Caco-2 (cell line): ENCODE measurements at regions of chr1 and their contacts with region 1.

Region 1: GRCh38 chr1:62778216-62778615 is 5.7 kb upstream of the ATG4C start:
- DNase-seq: peak; percentile 41 to 49
- H3K4me3 ChIP-seq: no peak overlapping the region
- H3K4me3 Mint-ChIP-seq: peak overlapping the region; percentile 15
- H3K27ac Mint-ChIP-seq: peak overlapping the region; percentile 71
- H3K4me1 ChIP-seq: peaks cover 14% of the 10 kb centered on the region
- H3K4me1 Mint-ChIP-seq: peaks cover 16% of the 10 kb centered on the region
- H3K27me3 ChIP-seq: no peaks in the 10 kb centered on the region
- H3K27me3 Mint-ChIP-seq: no peaks in the 10 kb centered on the region
- CTCF ChIP-seq: no peak

Region 2: DNA sequence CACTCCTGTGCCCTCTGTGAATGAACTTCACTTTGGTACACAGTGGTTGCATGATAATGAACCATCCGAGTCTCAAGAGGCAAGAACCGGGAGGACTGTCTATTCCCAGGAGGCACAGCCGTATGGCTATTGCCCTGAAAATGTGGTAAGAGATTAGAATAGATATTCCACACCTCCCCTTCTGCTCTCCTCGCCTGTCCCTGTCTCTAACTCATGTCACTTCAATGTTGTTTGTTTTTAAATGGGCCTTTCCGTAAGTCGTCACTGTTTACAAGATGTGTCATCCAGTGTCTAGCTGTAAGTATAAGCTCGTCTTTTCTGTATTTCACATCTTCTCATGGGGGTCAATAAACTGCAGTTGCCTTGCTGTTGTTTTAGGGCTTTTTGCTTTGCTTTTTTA is 913.7 kb before region 1 on chr1:
- CTCF ChIA-PET with region 1: no interaction called
- POLR2A ChIA-PET with region 1: no interaction called
- intact Hi-C with region 1: no loop called
- DNase-seq: no peak
- H3K4me3 ChIP-seq: no peak overlapping the region
- H3K4me3 Mint-ChIP-seq: no peak overlapping the region
- H3K27ac Mint-ChIP-seq: no peak overlapping the region
- H3K4me1 ChIP-seq: no peaks in the 10 kb centered on the region
- H3K4me1 Mint-ChIP-seq: peaks cover 7% of the 10 kb centered on the region
- H3K27me3 ChIP-seq: no peaks in the 10 kb centered on the region
- H3K27me3 Mint-ChIP-seq: no peaks in the 10 kb centered on the region
- CTCF ChIP-seq: no peak

Region 3: DNA sequence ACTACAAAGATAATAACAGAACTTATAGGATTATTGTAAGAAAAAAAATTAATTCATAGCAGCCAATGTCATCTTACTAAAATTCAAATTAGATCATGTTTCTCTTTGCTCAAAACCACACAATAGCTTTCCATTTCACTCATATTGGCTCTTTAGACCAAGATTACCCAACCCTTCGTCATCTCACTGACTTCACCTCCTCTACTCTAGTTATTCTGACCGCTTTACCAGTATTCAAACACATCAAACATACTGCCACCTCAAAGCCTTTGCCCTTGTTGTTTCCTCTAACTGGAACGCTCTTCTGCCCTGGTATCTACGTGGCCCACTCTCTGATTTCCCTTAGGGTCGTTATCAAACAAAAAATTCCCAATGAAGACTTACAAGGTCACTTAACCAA is 179.2 kb before region 1 on chr1:
- CTCF ChIA-PET with region 1: no interaction called
- POLR2A ChIA-PET with region 1: no interaction called
- intact Hi-C with region 1: no loop called
- DNase-seq: no peak
- H3K4me3 ChIP-seq: no peak overlapping the region
- H3K4me3 Mint-ChIP-seq: no peak overlapping the region
- H3K27ac Mint-ChIP-seq: no peak overlapping the region
- H3K4me1 ChIP-seq: peaks cover 17% of the 10 kb centered on the region
- H3K4me1 Mint-ChIP-seq: no peaks in the 10 kb centered on the region
- H3K27me3 ChIP-seq: no peaks in the 10 kb centered on the region
- H3K27me3 Mint-ChIP-seq: no peaks in the 10 kb centered on the region
- CTCF ChIP-seq: no peak

Region 4: GRCh38 chr1:62765981-62766380 is 12.2 kb before region 1 on chr1:
- CTCF ChIA-PET with region 1: no interaction called
- POLR2A ChIA-PET with region 1: no interaction called
- intact Hi-C with region 1: loop called (anchors 2 kb)
- DNase-seq: no peak
- H3K4me3 ChIP-seq: no peak overlapping the region
- H3K4me3 Mint-ChIP-seq: no peak overlapping the region
- H3K27ac Mint-ChIP-seq: peak overlapping the region; percentile 42
- H3K4me1 ChIP-seq: peaks cover 3% of the 10 kb centered on the region
- H3K4me1 Mint-ChIP-seq: peaks cover 7% of the 10 kb centered on the region
- H3K27me3 ChIP-seq: no peaks in the 10 kb centered on the region
- H3K27me3 Mint-ChIP-seq: no peaks in the 10 kb centered on the region
- CTCF ChIP-seq: no peak

Region 5: DNA sequence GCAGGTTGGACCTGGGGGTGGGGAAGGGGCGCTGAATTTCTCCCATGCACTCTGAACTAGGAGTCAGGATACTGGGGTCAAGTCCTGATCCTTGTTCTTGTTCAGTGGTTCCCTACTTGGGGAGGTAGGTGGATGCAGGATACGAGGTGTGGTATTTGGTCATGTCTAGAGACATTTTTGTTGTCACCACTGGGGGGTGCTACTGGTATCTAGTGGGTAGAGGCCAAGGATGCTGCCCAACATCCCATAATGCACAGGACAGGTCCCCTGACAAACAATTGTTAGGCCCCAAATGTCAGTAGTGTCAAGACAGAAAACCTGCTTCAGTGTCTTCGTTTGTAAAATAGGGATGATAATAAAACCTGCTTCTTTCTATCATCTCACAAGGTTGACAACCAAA is 285.2 kb after region 1 on chr1:
- CTCF ChIA-PET with region 1: no interaction called
- POLR2A ChIA-PET with region 1: no interaction called
- intact Hi-C with region 1: no loop called
- DNase-seq: peak in 1 of 2 experiments; percentile 2
- H3K4me3 ChIP-seq: no peak overlapping the region
- H3K4me3 Mint-ChIP-seq: no peak overlapping the region
- H3K27ac Mint-ChIP-seq: no peak overlapping the region
- H3K4me1 ChIP-seq: no peaks in the 10 kb centered on the region
- H3K4me1 Mint-ChIP-seq: no peaks in the 10 kb centered on the region
- H3K27me3 ChIP-seq: no peaks in the 10 kb centered on the region
- H3K27me3 Mint-ChIP-seq: peaks cover 6% of the 10 kb centered on the region
- CTCF ChIP-seq: no peak

Region 6: GRCh38 chr1:63127376-63127775 is 349.2 kb after region 1 on chr1:
- CTCF ChIA-PET with region 1: no interaction called
- POLR2A ChIA-PET with region 1: no interaction called
- intact Hi-C with region 1: no loop called
- DNase-seq: no peak
- H3K4me3 ChIP-seq: no peak overlapping the region
- H3K4me3 Mint-ChIP-seq: no peak overlapping the region
- H3K27ac Mint-ChIP-seq: no peak overlapping the region
- H3K4me1 ChIP-seq: no peaks in the 10 kb centered on the region
- H3K4me1 Mint-ChIP-seq: no peaks in the 10 kb centered on the region
- H3K27me3 ChIP-seq: no peaks in the 10 kb centered on the region
- H3K27me3 Mint-ChIP-seq: peaks cover 15% of the 10 kb centered on the region
- CTCF ChIP-seq: no peak